HepG2 (cell line): ENCODE measurements at regions of chr6 and their contacts with region 1.

Region 1: GRCh38 chr6:36027501-36028087 is at the start of gene MAPK14:
- DNase-seq: peak; percentile 100
- ATAC-seq: peak; percentile 92
- H3K4me3 ChIP-seq: peak within 1 kb of the TSS; percentile 86 to 97 (median 96)
- H3K27ac ChIP-seq: peak within 1 kb of the TSS; percentile 94
- H3K4me1 ChIP-seq: peaks cover 44% of the 10 kb centered on the region
- H3K27me3 ChIP-seq: no peaks in the 10 kb centered on the region; a peak in 1 of 5 replicates
- CTCF ChIP-seq: peak; percentile 99
- EP300 ChIP-seq: peak in 1 of 2 experiments; percentile 61; a peak in 1 of 4 replicates
- POLR2A ChIP-seq: peak; percentile 99
- RAD21 ChIP-seq: peak; percentile 98
- total RNA-seq, gene MAPK14: 67.3 and 74.9 TPM in 2 replicates

Region 2: GRCh38 chr6:35920793-35921732 is 106.5 kb before region 1 on chr6 and contains the start of gene SRPK1:
- CTCF ChIA-PET with region 1: no interaction called
- POLR2A ChIA-PET with region 1: interaction called, 4 read pairs
- in situ Hi-C with region 1: no loop called
- intact Hi-C with region 1: loop called (anchors 5 kb)
- DNase-seq: peak; percentile 87
- ATAC-seq: peak; percentile 86
- H3K4me3 ChIP-seq: peak within 1 kb of the TSS; percentile 72 to 93 (median 84)
- H3K27ac ChIP-seq: peak within 1 kb of the TSS; percentile 84
- H3K4me1 ChIP-seq: peaks cover 56% of the 10 kb centered on the region
- H3K27me3 ChIP-seq: no peaks in the 10 kb centered on the region; a peak in 1 of 5 replicates
- CTCF ChIP-seq: peak; percentile 16; the same call in 1 of the 2 replicates
- EP300 ChIP-seq: no peak
- POLR2A ChIP-seq: peak; percentile 97 to 98
- RAD21 ChIP-seq: peak; percentile 55
- total RNA-seq, gene SRPK1: 142 and 184 TPM in 2 replicates

Region 3: GRCh38 chr6:35973670-35974222 is 53.8 kb before region 1 on chr6:
- CTCF ChIA-PET with region 1: no interaction called
- POLR2A ChIA-PET with region 1: interaction called, 3 read pairs
- in situ Hi-C with region 1: no loop called
- intact Hi-C with region 1: loop called (anchors 1 kb)
- DNase-seq: peak; percentile 93
- ATAC-seq: peak; percentile 85
- H3K4me3 ChIP-seq: peak overlapping the region in 2 of 3 experiments; percentile 13 to 23; a peak in 1 of 6 replicates
- H3K27ac ChIP-seq: peak overlapping the region; percentile 67
- H3K4me1 ChIP-seq: peaks cover 32% of the 10 kb centered on the region
- H3K27me3 ChIP-seq: no peaks in the 10 kb centered on the region
- CTCF ChIP-seq: no peak
- EP300 ChIP-seq: peak in 1 of 2 experiments; percentile 72; a peak in 2 of 4 replicates
- POLR2A ChIP-seq: no peak
- RAD21 ChIP-seq: peak; percentile 8; the same call in 1 of the 2 replicates

Region 4: GRCh38 chr6:36067374-36068011 is 39.9 kb after region 1 on chr6:
- CTCF ChIA-PET with region 1: no interaction called
- POLR2A ChIA-PET with region 1: interaction called, 50 read pairs
- in situ Hi-C with region 1: no loop called
- intact Hi-C with region 1: loop called (anchors 2 kb)
- DNase-seq: no peak
- ATAC-seq: no peak
- H3K4me3 ChIP-seq: no peak overlapping the region
- H3K27ac ChIP-seq: peak overlapping the region; percentile 91
- H3K4me1 ChIP-seq: peaks cover 71% of the 10 kb centered on the region
- H3K27me3 ChIP-seq: no peaks in the 10 kb centered on the region
- CTCF ChIP-seq: no peak
- EP300 ChIP-seq: no peak
- POLR2A ChIP-seq: no peak
- RAD21 ChIP-seq: no peak

Region 5: DNA sequence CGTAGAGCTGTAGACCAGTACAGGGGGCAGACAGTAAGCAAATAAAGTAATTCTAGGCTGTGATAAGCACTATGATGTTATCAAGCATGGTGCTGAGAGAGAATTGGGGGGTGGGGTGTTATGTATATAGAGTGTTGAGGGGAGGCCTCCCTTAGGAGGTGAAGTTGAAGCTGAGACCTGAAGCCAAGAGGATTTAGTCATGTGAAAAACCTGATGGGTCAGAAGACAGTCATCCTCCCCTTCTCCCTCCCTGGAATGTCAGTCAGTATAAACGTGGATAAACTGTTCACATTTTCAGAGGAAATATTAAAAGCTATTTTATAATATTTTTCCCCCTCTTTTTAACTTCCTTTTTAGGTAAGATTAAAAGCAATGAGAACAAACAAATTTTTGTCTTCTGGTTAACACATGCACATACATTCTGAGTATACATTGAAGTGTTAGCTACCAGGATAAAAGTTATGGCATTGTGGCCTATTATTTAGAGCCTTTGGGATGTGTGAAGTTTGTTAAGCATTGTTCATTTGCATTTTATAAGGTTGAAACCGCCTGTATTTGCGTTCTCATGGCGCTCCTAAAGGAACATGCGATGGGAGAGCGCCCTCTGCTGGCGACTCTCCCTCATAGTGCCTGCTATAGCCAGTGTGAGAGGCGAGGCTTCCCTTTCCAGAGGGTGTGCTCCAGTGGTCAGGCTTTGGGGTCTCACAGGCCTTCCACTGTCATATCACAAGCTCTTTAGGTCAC is 67.3 kb after region 1 on chr6:
- CTCF ChIA-PET with region 1: interaction called, 52 read pairs
- POLR2A ChIA-PET with region 1: interaction called, 163 read pairs
- in situ Hi-C with region 1: loop called (anchors 5 kb)
- intact Hi-C with region 1: loop called (anchors 1 kb)
- DNase-seq: peak; percentile 81
- ATAC-seq: peak; percentile 94
- H3K4me3 ChIP-seq: peak overlapping the region in 1 of 3 experiments; percentile 61; a peak in 1 of 6 replicates
- H3K27ac ChIP-seq: peak overlapping the region; percentile 90
- H3K4me1 ChIP-seq: peaks cover 34% of the 10 kb centered on the region
- H3K27me3 ChIP-seq: no peaks in the 10 kb centered on the region
- CTCF ChIP-seq: peak; percentile 99
- EP300 ChIP-seq: no peak
- POLR2A ChIP-seq: no peak
- RAD21 ChIP-seq: peak; percentile 97

Region 6: DNA sequence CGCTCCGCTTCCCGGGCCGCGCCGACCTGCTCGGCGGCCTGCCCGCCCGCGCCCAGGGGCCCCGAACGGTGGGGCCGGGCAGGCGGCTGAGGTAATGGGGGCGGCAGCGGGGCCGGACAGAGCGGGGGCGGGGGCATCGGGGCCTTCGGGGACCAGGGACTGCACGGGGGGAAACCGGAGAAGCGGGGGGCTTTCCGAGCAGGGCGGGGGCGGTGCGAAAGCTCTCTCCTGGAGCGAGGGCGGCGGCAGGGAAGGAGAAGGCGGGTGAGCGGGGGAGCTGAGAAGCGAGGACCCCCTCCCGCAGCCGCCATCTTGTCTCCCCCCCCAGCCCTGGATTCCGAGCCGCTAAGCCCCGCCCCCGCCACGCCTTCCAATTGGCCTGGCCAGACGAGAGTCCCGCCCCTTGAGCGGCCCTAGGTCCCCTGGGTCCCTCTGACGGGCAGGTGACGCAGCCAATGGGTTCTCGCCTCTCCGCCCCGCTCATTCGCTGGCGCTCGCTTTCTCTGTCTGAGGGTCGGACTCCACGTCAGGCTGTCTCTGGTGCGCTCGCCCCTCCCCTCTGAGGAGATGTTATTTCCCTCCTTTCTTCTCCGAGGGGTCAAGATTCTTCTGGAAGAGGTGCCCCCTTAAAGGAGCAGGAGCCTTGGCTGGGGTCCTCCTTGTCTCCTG is 169.4 kb after region 1 on chr6:
- CTCF ChIA-PET with region 1: no interaction called
- POLR2A ChIA-PET with region 1: interaction called, 9 read pairs
- in situ Hi-C with region 1: loop called (anchors 5 kb)
- intact Hi-C with region 1: loop called (anchors 2 kb)
- DNase-seq: peak; percentile 96
- ATAC-seq: peak; percentile 95
- H3K4me3 ChIP-seq: peak overlapping the region; percentile 65 to 90 (median 81)
- H3K27ac ChIP-seq: peak overlapping the region; percentile 92
- H3K4me1 ChIP-seq: peaks cover 22% of the 10 kb centered on the region
- H3K27me3 ChIP-seq: no peaks in the 10 kb centered on the region
- CTCF ChIP-seq: no peak
- EP300 ChIP-seq: no peak
- POLR2A ChIP-seq: peak; percentile 70 to 75
- RAD21 ChIP-seq: no peak